Lower leg skin (tissue), 4 donors: ENCODE measurements at regions of chr21 and their contacts with region 1.

Region 1: DNA sequence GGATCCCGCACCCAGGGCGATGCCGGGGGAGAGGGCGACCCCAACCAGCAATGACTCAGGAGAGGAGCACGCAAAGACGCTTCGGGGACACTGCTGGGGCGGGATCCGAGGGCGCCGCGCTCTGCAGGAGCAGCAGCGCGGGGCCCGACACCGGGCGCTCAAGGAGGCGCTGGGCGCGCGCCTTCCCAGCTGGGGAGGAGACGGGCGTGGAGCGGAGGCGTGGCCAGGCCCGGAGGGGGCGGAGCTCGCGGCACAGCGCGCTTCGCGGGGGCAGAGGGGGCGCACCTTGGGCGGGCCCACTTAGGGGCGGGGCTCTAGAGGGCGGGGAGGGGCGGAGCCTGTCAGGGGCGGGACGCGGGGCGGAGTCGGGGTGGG is 369 bp downstream of the SUMO3 start:
- DNase-seq: peak; percentile 87 to 98
- H3K4me3 ChIP-seq: peak overlapping the region; percentile 55
- CTCF ChIP-seq: no peak
- POLR2A ChIP-seq: no peak

Region 2: GRCh38 chr21:44873356-44874239 is 56.1 kb after region 1 on chr21 and contains the start of gene PTTG1IP:
- intact Hi-C with region 1: loop called (anchors 10 kb)
- DNase-seq: peak; percentile 97 to 100
- H3K4me3 ChIP-seq: peak within 1 kb of the TSS; percentile 86
- CTCF ChIP-seq: no peak
- POLR2A ChIP-seq: peak in 1 of 2 donors; percentile 59
- total RNA-seq, gene PTTG1IP: 110 to 193 (median 133) TPM

Region 3: DNA sequence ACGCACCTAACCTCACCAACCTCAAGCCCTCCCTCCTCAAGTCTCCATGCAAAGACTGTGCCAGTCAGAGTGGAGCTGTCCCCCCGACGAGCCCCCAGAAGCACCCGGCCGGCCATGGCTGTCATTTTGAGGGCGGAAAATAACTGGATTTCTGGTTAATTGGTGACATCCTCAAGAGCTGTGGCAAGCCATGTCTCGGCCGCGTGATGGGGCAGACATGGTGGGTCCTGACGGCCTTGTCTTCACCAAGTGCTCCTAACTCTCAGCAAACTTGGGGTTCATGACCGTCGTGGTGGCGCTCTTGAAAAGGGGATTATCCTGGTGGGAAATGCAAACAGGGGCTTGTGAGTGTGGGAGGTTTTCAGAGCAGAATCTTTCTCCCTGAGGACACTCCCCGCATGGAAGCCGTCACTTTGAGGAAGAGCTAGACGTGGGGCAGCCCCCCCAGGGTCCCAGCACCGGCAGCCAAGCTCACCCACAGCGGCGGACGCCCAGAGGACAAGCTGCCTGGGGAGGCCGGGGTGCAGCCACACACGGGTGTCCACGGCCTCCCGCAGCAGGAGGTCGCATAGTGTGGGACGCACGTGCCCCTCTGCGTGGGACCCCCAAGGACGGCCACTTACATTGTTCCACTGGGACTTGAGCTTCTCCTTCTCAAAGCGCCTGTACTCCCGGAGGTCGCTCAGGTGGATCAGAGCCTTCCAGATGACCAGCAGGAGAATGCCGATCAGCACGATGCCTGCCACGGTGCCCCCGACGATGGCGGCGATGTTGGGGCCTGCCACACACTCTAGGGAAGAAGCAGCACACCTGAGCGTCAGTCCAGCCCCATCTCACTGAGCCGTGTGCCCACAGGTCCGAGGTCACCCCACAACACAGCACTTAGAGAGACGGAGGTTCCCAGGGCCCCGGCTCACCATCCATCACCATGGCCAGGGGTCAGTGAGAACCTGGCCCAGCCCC is 68.9 kb after region 1 on chr21:
- intact Hi-C with region 1: no loop called
- DNase-seq: no peak
- H3K4me3 ChIP-seq: no peak overlapping the region
- CTCF ChIP-seq: no peak
- POLR2A ChIP-seq: no peak

Region 4: DNA sequence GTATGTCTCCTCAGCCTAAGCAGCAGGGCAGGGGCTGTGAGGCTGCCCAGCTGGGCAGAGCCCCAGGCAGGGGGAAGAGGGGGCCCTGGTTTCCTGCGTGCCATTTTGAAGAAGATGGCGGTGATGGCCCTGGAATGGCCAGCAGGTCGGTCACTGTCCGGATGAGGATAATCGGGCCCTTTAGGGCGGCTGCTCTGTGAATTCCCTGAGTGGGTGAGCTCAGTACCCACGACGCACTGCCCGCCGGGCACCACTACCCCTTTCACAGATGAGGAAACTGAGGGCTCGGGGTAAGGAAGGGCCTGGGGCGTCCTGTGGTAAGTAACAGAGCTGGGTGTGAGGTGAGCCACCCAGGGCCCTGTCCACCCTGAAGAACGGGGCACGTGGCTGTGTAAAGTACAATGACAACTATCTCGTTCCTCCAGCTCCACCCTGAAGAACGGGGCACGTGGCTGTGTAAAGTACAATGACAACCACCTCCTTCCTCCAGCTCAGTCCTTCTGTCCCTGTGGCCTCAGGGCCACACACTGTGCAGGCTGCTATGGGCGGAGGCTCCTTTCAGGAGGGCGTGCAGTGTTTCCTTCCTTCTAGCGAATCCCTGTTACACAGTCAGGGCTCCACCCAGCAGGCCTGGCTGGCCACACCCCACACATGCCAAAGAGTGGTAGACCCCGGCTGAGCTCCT is 80.0 kb after region 1 on chr21:
- intact Hi-C with region 1: no loop called
- DNase-seq: no peak
- H3K4me3 ChIP-seq: no peak overlapping the region
- CTCF ChIP-seq: no peak
- POLR2A ChIP-seq: no peak